Activated CD4-positive, alpha-beta memory T cell treated with anti-CD3 and anti-CD28 coated beads for 36 hours (primary cell): ENCODE measurements at regions of chr10 and their contacts with region 1.

Region 1: DNA sequence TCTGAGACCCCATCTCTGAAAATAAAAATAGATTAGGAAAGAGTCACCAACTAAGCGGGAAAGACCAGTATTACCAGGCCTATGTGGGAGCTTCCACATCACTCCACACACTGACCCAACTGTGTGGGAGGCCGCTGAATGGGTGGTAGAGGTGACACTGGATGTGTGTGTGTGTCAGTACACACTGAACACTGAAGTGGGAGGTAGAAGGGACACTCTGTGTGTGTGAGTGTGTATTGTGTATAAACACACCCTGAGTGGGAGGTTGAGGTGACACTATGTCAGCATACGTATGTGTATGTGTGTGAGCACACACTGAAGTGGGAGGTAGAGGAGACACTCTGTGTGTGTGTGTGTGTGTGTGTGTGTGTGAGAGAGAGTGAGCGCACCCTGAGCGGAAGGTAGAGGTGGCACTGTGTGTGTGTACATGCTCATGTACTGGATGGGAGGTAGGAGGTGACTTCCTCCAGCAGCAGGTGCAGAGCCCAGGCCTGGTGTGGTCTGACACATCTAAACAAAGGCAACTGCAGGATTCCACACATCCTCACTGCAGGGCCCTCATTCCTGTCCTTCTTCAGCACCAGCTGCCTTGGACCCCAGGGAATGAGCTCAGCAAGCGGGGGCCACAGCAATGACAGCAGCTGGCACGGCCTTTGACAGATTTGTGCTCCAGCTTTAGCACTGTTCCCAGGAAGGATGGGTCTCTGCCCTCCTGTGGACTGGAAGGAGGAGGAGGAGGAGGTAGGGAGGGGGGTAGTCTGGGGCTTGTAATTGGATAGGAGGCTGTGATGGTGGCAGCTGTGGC is 26.5 kb upstream of the RBM20 start:
- DNase-seq: no peak
- H3K4me3 Mint-ChIP-seq: no peak overlapping the region
- H3K27ac Mint-ChIP-seq: no peak overlapping the region
- H3K4me1 Mint-ChIP-seq: peaks cover 37% of the 10 kb centered on the region
- H3K27me3 Mint-ChIP-seq: no peaks in the 10 kb centered on the region

Region 2: GRCh38 chr10:110591760-110592159 is 25.9 kb before region 1 on chr10:
- CTCF ChIA-PET with region 1: no interaction called
- POLR2A ChIA-PET with region 1: no interaction called
- intact Hi-C with region 1: no loop called
- DNase-seq: no peak
- H3K4me3 Mint-ChIP-seq: no peak overlapping the region
- H3K27ac Mint-ChIP-seq: no peak overlapping the region
- H3K4me1 Mint-ChIP-seq: no peaks in the 10 kb centered on the region
- H3K27me3 Mint-ChIP-seq: no peaks in the 10 kb centered on the region

Region 3: GRCh38 chr10:110641256-110641655 is 23.6 kb after region 1 on chr10:
- CTCF ChIA-PET with region 1: no interaction called
- POLR2A ChIA-PET with region 1: no interaction called
- intact Hi-C with region 1: loop called (anchors 2 kb)
- DNase-seq: peak; percentile 67
- H3K4me3 Mint-ChIP-seq: no peak overlapping the region
- H3K27ac Mint-ChIP-seq: no peak overlapping the region
- H3K4me1 Mint-ChIP-seq: peaks cover 25% of the 10 kb centered on the region
- H3K27me3 Mint-ChIP-seq: peaks cover 38% of the 10 kb centered on the region

Region 4: GRCh38 chr10:110671788-110672579 is 54.4 kb after region 1 on chr10:
- CTCF ChIA-PET with region 1: interaction called, 54 read pairs
- POLR2A ChIA-PET with region 1: interaction called, 4 read pairs
- intact Hi-C with region 1: no loop called
- DNase-seq: peak; percentile 81
- H3K4me3 Mint-ChIP-seq: peak overlapping the region; percentile 78
- H3K27ac Mint-ChIP-seq: no peak overlapping the region
- H3K4me1 Mint-ChIP-seq: peaks cover 2% of the 10 kb centered on the region
- H3K27me3 Mint-ChIP-seq: no peaks in the 10 kb centered on the region

Region 5: DNA sequence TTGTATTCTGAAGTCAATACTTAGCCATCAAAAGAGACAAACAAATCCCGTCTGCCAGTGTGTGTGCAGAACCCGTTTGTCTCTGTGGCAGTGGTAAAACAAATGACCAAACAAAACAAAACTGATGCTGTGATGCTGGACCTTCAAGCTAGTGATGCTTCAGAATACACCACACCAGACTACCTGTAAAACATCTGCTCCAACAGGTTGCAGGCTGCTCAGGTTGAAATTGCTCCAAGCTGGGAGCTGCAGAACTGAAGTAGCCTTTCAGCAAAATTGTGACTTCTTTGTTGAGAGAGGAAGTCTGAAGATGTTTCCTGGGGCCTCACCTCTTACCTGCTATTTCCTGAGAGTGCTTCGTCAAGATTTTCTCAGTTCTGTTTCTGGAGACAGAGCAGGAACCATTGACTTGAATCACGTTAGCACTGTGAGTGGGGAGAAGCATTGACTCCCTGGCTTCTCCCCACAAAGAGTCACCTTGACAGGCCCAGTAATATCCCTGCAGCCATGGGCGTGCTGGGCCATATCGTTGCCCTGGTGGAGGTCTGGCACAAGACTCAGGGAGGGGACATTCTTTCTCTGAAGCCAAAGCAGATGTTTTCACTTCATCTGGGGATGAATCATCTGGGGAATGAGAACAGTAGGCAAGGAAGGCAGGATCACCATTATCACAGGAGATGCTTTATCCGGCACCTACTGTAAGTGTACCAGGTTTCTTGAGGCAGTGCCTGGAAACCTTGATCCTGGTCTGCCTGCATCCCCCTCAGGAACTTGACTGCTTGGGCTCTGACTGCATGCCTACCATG is 106.7 kb after region 1 on chr10:
- CTCF ChIA-PET with region 1: no interaction called
- POLR2A ChIA-PET with region 1: no interaction called
- intact Hi-C with region 1: loop called (anchors 1 kb)
- DNase-seq: peak; percentile 35
- H3K4me3 Mint-ChIP-seq: no peak overlapping the region
- H3K27ac Mint-ChIP-seq: peak overlapping the region; percentile 3
- H3K4me1 Mint-ChIP-seq: peaks cover 37% of the 10 kb centered on the region
- H3K27me3 Mint-ChIP-seq: no peaks in the 10 kb centered on the region